ENCODE measurements at regions of chr17 and their contacts with region 1.

Region 1: GRCh38 chr17:82551779-82552457 is 32.4 kb downstream of the FOXK2 start:
- DNase-seq: no peak
- H3K4me3 ChIP-seq: no peak overlapping the region
- CTCF ChIP-seq: peak; percentile 75

Region 2: DNA sequence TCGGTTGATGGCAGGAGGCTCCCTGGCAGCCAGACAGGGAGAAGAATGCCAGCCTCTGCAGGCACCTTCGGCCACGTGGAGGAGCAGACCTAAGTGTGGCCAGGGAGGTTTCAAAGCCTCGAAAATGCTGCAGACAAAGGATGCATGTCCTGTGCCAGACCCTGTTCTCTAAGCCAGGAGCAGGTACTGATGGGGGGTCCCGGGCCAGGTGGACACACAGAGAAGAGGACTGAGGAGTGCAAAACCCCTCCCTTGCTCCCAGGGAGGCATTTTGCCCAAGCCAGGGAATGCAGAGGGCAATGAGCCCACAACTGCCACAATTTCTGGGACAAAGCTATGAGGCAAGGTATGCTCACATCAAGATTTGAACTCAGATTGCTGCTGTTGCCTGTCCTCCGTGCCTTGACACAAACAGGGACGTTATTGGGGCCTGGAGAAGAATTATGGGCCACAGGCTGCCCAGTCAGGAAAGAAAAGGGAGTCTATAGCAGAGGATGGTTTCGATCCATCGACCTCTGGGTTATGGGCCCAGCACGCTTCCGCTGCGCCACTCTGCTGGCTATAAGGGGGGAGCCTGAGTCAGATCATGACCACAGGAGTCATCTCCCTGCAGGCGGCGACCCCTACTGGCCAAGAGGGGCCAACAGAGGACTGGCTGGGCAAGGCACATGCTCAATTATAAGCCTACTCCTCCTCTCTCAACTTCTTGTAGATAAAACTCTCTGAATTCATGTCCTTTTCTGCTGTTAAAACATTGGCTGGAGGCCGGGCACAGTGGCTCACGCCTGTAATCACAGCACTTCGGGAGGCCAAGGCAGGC is 57.5 kb before region 1 on chr17:
- CTCF ChIA-PET with region 1: interaction called, 19 read pairs
- POLR2A ChIA-PET with region 1: no interaction called
- DNase-seq: peak; percentile 94
- H3K4me3 ChIP-seq: no peak overlapping the region
- CTCF ChIP-seq: peak; percentile 96

Region 3: GRCh38 chr17:82528484-82529265 is 23.2 kb before region 1 on chr17:
- CTCF ChIA-PET with region 1: interaction called, 22 read pairs
- POLR2A ChIA-PET with region 1: no interaction called
- DNase-seq: no peak
- H3K4me3 ChIP-seq: no peak overlapping the region
- CTCF ChIP-seq: no peak

Region 4: DNA sequence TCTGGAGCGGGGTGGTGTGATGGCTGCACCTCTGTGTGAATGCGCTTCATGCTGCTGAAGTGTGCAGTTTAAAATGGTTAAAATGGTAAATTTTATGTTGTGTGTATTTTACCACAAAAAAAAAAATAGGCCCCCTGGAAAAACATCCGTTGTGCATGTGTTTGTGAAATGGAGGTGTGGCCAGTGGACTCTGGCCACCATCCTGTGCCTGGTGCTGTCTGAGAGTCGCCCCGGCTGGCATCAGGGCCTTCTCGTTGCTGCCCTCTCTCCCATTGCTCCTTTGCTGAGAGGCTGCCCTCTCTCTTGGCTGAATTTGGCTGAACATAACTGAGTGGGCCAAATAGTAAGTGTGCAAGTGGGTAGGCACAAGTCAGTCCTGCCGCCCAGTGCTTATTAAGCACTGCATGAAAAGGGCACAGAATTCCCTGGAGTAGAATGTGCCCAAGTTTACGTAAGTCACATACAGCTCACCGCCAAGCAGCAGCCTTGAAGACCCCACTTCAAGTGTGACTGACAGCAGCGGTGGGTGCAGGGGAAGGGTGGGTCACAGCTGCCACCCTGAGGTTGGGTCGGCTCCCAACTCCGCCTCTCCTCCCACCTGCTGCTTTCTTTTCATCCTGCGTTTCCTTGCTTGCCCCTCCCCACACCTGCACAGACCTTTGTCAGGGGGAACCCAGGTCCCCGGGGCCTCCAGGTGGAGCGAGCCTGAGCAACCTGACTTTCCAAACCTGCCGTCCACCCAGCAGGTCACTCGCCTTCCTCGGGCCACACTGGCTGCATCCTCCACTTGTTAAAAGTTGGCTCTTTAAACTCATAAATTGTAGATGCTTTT is 14.4 kb after region 1 on chr17:
- CTCF ChIA-PET with region 1: interaction called, 20 read pairs
- POLR2A ChIA-PET with region 1: no interaction called
- DNase-seq: no peak
- H3K4me3 ChIP-seq: no peak overlapping the region
- CTCF ChIP-seq: no peak

Measured in AG04449 (cell line).